T-cell (primary cell): ENCODE measurements at regions of chr10 and their contacts with region 1.

Region 1: DNA sequence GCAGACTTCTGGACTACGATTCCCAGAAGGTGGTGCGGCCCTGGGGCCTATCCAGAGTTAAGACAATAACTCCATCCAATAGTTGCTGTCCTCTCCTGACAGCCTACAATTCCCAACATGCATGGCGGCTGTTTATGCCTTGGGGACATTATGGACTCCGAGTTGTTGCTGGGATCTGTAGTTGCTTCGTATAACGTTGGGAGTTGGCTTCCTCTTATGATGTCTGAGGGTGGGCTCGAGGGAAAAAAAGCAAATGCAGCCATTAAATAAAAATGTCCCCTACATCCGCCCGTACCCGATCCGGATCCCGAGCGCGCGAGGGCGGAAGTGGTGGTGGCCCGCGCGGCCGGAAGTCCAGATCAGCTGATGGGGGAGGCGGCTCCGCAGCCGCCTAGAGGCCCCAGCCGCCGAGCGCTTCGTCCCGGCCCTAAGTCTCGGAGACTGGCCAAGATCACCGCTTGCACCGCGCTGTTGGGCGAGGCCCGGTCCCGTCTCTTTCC is at the start of gene ZSWIM8:
- DNase-seq: peak; percentile 74 to 93 (median 85)
- ATAC-seq: peak; percentile 82 to 87 (median 84)
- H3K4me3 ChIP-seq: peak within 1 kb of the TSS; percentile 67 to 86
- H3K4me3 Mint-ChIP-seq: peak within 1 kb of the TSS; percentile 90 to 97 (median 92)
- H3K27ac ChIP-seq: peak within 1 kb of the TSS; percentile 60
- H3K27ac Mint-ChIP-seq: peak within 1 kb of the TSS; percentile 97 to 98
- H3K4me1 ChIP-seq: peaks cover 34 to 45% of the 10 kb centered on the region in 2 experiments
- H3K4me1 Mint-ChIP-seq: peaks cover 46 to 66% (median 51%) of the 10 kb centered on the region in 3 donors
- H3K27me3 ChIP-seq: no peaks in the 10 kb centered on the region
- H3K27me3 Mint-ChIP-seq: no peaks in the 10 kb centered on the region
- total RNA-seq, gene ZSWIM8: 69.0 to 106 (median 90.8) TPM

Region 2: DNA sequence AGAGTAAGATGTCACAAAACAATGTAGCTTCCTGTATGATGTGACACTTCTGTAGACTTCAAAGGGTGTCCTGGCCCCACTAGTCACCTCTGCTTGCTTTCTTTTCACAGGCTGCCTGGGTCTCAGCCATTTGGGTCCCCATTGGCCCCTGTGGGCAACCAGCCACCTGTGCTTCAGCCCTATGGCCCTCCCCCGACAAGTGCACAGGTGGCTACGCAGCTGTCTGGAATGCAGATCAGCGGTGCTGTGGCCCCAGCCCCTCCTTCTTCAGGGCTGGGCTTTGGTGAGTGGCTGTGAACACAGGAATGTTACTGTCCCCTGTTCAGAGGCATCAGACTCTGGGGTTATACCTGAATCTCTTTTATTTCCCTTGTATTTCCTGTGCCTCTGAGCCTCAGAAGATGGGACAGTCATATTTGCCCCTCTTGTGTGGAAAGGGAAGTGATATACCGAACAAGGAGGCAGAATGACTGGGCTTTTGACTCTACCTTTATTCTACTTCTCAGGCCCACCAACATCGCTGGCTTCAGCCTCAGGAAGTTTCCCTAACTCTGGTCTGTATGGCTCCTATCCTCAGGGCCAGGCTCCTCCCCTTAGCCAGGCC is 25.7 kb before region 1 on chr10:
- CTCF ChIA-PET with region 1: interaction called in 1 of 2 experiments, 6 read pairs
- POLR2A ChIA-PET with region 1: interaction called in 1 of 2 experiments, 13 read pairs
- DNase-seq: peak in 34 of 35 experiments; percentile 40 to 83 (median 70)
- ATAC-seq: peak; percentile 74 to 91 (median 82)
- H3K4me3 ChIP-seq: no peak overlapping the region
- H3K4me3 Mint-ChIP-seq: peak overlapping the region; percentile 8 to 42 (median 32)
- H3K27ac ChIP-seq: peak overlapping the region; percentile 83
- H3K27ac Mint-ChIP-seq: peak overlapping the region; percentile 71 to 92
- H3K4me1 ChIP-seq: peaks cover 2 to 56% of the 10 kb centered on the region in 2 experiments
- H3K4me1 Mint-ChIP-seq: peaks cover 45 to 68% (median 52%) of the 10 kb centered on the region in 3 donors
- H3K27me3 ChIP-seq: no peaks in the 10 kb centered on the region
- H3K27me3 Mint-ChIP-seq: no peaks in the 10 kb centered on the region

Region 3: DNA sequence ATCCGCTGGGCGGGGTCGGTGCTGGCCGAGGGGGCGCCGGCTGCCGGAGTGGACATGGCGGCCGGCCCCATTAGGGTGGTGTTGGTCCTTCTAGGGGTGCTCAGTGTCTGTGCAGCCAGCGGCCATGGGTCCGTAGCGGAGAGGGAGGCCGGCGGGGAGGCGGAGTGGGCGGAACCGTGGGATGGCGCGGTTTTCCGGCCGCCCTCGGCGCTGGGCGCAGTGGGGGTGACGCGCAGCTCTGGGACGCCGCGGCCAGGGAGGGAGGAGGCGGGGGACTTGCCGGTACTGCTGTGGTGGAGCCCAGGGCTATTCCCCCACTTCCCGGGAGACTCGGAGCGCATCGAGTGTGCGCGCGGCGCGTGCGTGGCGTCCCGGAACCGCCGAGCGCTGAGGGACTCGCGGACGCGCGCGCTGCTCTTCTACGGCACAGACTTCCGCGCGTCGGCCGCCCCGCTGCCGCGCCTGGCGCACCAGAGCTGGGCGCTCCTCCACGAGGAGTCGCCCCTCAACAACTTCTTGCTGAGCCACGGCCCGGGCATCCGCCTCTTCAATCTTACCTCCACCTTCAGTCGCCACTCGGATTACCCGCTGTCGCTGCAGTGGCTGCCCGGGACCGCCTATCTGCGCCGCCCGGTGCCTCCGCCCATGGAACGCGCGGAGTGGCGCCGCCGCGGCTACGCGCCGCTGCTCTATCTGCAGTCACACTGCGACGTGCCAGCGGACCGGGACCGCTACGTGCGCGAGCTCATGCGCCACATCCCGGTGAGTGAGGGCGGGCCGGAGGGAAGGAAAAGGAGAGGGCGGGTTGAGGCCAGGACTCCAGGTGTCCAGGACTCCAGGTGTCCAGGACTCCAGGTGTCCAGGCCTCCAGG is 12.8 kb before region 1 on chr10:
- CTCF ChIA-PET with region 1: interaction called, 9 to 35 read pairs
- POLR2A ChIA-PET with region 1: interaction called in 1 of 2 experiments, 12 read pairs
- DNase-seq: peak; percentile 64 to 92 (median 74)
- ATAC-seq: peak; percentile 72 to 75 (median 74)
- H3K4me3 ChIP-seq: peak overlapping the region; percentile 74 to 92
- H3K4me3 Mint-ChIP-seq: peak overlapping the region; percentile 93 to 97 (median 94)
- H3K27ac ChIP-seq: peak overlapping the region; percentile 84
- H3K27ac Mint-ChIP-seq: peak overlapping the region; percentile 94 to 95
- H3K4me1 ChIP-seq: peaks cover 25 to 56% of the 10 kb centered on the region in 2 experiments
- H3K4me1 Mint-ChIP-seq: peaks cover 57 to 67% (median 65%) of the 10 kb centered on the region in 3 donors
- H3K27me3 ChIP-seq: no peaks in the 10 kb centered on the region
- H3K27me3 Mint-ChIP-seq: no peaks in the 10 kb centered on the region

Region 4: DNA sequence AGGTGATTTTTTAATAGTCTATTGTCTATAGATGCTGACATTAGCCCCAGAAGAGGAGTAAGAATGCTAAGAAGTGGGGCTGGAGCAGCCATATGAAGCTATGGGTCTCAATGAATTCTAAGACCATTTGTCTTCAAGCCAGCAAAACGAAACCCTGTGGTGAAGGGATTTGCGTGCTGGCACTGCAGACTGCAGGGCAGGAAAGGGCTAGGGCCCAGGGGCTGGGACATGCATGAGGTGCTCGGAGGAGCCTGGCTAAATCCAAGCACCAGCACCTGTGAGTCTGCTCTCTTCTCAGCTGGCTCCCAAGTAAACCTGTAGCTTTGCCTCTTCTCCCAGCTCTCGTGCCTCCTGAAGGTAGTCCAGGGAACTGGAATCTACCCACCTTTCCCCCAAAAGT is 27.4 kb after region 1 on chr10:
- CTCF ChIA-PET with region 1: interaction called, 3 to 4 read pairs
- POLR2A ChIA-PET with region 1: interaction called in 1 of 2 experiments, 11 read pairs
- DNase-seq: peak in 1 of 35 experiments; percentile 22
- ATAC-seq: no peak
- H3K4me3 ChIP-seq: no peak overlapping the region
- H3K4me3 Mint-ChIP-seq: peak overlapping the region; percentile 53 to 89 (median 57)
- H3K27ac ChIP-seq: peak overlapping the region; percentile 53
- H3K27ac Mint-ChIP-seq: peak overlapping the region; percentile 82 to 86
- H3K4me1 ChIP-seq: peaks cover 0 to 34% of the 10 kb centered on the region in 2 experiments
- H3K4me1 Mint-ChIP-seq: peaks cover 30 to 38% (median 31%) of the 10 kb centered on the region in 3 donors
- H3K27me3 ChIP-seq: no peaks in the 10 kb centered on the region
- H3K27me3 Mint-ChIP-seq: no peaks in the 10 kb centered on the region